ENCODE measurements at regions of chr3 and their contacts with region 1.

Region 1: DNA sequence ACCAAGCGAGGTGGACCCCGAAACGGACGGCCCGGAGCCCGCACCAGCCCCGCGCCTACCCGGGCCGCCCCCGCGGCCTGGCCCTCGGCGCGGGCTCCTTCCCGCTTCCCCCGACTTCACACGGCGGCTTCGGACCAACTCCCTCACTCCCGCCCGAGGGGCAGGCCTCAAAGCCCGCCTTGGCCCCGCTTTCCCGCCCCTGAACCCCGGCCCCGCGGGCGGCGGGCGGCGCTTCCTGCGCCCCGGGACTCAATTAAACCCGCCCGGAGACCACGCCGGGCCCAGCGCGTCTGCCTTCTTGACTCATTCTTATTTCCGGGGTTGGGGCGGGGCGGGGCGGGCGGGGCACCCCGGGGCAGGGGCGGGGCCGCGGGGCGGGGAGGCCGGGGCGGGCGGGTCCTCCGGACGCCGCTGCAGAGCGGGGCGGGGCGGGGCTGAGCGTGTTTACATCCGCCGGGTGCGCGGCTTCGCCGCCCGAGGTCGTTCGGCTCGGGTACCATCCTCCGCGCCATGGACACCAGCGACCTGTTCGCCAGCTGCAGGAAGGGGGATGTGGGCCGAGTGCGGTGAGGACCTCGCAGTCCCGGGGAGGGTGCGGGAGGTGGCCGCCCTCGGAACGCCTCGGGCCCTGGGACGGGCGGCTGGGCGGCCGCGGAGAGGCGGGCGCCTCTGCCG is at the start of gene ABTB1:
- DNase-seq: peak; percentile 91 to 93 (median 93)
- ATAC-seq: peak; percentile 87 to 96 (median 90)
- H3K4me3 ChIP-seq: peak within 1 kb of the TSS; percentile 85 to 88 (median 88)
- H3K27ac ChIP-seq: peak within 1 kb of the TSS; percentile 74 to 90 (median 79)
- H3K4me1 ChIP-seq: peaks cover 0 to 10% (median 3%) of the 10 kb centered on the region in 4 donors
- H3K27me3 ChIP-seq: no peaks in the 10 kb centered on the region
- CTCF ChIP-seq: no peak
- POLR2A ChIP-seq: peak; percentile 78
- total RNA-seq, gene ABTB1: 9.4 to 20.3 (median 12.2) TPM

Region 2: GRCh38 chr3:126703512-126704462 is 968.9 kb before region 1 on chr3 and contains the start of gene CHCHD6:
- intact Hi-C with region 1: no loop called
- DNase-seq: peak; percentile 94 to 96 (median 96)
- ATAC-seq: peak; percentile 99 to 100 (median 99)
- H3K4me3 ChIP-seq: peak within 1 kb of the TSS; percentile 65 to 89 (median 73)
- H3K27ac ChIP-seq: no peak within 1 kb of the TSS
- H3K4me1 ChIP-seq: peaks cover 0 to 11% (median 0%) of the 10 kb centered on the region in 4 donors
- H3K27me3 ChIP-seq: no peaks in the 10 kb centered on the region
- CTCF ChIP-seq: no peak
- POLR2A ChIP-seq: no peak
- total RNA-seq, gene CHCHD6: 1.7 to 5.3 (median 4.2) TPM

Region 3: DNA sequence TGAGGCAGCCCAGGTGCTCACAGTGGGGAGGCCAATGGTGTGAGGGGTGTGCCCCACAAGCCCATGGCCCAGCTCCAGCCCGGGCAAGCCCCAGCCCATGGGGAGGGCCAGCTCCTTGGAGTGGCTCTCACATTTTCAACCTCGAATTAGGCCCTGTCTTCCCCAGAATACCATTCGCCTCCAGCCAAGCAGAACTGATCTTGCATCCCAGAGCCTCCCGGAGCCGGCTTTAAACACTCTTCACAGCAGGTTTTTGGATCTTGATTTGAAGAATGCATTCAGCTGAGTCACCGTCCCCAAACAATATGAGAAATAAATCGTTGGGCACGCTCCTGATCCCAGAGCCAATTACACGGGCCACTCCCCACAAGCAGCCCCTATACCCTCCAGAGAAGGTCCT is 105.8 kb before region 1 on chr3:
- intact Hi-C with region 1: no loop called
- DNase-seq: no peak
- ATAC-seq: no peak
- H3K4me3 ChIP-seq: no peak overlapping the region
- H3K27ac ChIP-seq: no peak overlapping the region
- H3K4me1 ChIP-seq: peaks cover 0 to under 1% (median 0%) of the 10 kb centered on the region in 4 donors
- H3K27me3 ChIP-seq: no peaks in the 10 kb centered on the region
- CTCF ChIP-seq: no peak
- POLR2A ChIP-seq: no peak

Region 4: DNA sequence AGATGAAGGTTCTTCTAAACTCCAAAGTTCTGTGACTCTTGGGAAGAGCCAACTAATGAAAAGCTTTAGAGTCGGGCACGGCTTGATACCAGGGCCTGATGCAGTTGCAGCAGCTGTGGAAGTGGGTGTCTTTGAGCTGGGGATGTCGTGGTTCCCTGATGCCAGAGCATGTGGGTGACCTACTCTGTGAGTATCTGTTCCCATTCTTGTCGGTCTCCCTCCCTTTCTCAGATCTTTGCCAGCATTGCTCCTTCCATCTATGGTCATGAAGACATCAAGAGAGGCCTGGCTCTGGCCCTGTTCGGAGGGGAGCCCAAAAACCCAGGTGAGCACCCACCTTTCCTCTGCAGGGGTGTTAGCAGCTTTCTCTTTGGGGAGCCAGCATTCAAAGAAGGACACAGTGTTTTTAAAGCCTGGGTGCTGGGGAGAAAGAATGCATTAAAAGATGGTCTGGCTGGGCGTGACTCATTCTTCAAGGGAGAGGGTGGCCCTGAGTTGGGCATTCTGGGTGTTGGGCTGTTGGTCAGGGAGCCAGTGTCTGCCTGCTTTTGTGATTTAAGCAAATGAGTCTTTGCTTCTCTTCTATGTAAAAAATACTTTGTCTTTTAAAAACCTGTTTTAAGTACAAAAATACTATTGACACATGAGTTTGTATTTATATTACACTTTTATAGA is 56.9 kb before region 1 on chr3:
- intact Hi-C with region 1: no loop called
- DNase-seq: peak in 1 of 3 donors; percentile 10
- ATAC-seq: no peak
- H3K4me3 ChIP-seq: no peak overlapping the region
- H3K27ac ChIP-seq: no peak overlapping the region
- H3K4me1 ChIP-seq: peaks cover 0 to 16% (median 4%) of the 10 kb centered on the region in 4 donors
- H3K27me3 ChIP-seq: no peaks in the 10 kb centered on the region
- CTCF ChIP-seq: no peak
- POLR2A ChIP-seq: no peak

Region 5: DNA sequence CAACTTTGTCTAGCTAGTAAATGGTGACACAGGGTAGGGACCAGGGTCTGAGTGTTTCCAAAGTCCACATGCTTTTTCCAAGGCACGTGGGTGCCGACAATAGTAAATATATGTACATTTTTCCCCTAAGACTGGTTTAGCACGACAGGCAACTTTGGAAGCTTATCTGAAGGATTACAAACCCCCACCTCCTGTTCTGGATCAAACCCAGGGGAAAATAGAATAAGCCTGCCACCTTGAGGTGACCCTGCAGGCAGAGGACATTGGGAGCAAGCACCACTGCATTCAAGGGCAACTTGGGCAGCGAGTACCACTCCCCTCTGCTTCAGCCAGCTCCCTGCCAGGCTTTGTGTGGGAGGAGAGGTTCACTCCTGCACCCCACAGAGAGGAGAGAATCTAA is 287.2 kb after region 1 on chr3:
- intact Hi-C with region 1: loop called in 1 of 2 experiments (anchors 10 kb)
- DNase-seq: no peak
- ATAC-seq: peak; percentile 73 to 86 (median 78)
- H3K4me3 ChIP-seq: no peak overlapping the region
- H3K27ac ChIP-seq: no peak overlapping the region
- H3K4me1 ChIP-seq: no peaks in the 10 kb centered on the region
- H3K27me3 ChIP-seq: no peaks in the 10 kb centered on the region
- CTCF ChIP-seq: peak in 3 of 4 donors; percentile 44 to 56 (median 49)
- POLR2A ChIP-seq: no peak

Measured in right lobe of liver (tissue), 6 donors.